ENCODE measurements at regions of chr7 and their contacts with region 1.

Region 1: DNA sequence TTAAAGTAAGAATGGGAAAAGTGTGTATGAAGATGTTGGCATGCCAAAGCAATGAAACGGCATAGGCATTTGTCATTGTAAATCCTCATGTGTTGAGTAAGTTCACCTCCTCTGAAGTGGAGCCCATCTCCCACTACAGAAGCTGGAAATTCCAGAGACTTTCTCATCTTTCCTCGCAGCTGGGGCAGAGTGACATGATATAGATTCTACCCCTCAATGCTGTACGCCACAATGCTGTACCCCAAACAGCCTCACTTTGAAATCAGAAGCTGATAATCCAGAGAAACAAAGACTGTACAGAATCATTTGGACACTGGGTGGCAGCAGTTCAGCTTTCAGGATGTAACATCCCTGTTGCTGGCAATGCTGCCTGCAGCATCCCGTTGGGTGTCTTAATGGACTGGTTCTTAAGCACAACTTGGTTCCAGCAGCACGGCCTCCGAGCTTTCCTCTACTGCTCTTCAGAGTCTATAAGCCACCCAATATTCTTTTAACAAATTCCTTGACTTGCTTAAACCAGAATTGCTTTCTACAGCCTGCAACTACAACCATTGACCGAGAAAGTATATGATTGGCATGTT is 18.8 kb downstream of the ZC3HAV1L start:
- DNase-seq: peak; percentile 52
- H3K4me3 Mint-ChIP-seq: no peak overlapping the region
- H3K27ac Mint-ChIP-seq: no peak overlapping the region
- H3K4me1 Mint-ChIP-seq: peaks cover 7% of the 10 kb centered on the region
- H3K27me3 Mint-ChIP-seq: peaks cover 11% of the 10 kb centered on the region

Region 2: GRCh38 chr7:139035586-139036353 is 18.7 kb after region 1 on chr7 and contains the start of gene ZC3HAV1L:
- intact Hi-C with region 1: loop called (anchors 1 kb)
- DNase-seq: peak; percentile 48
- H3K4me3 Mint-ChIP-seq: peak within 1 kb of the TSS; percentile 91
- H3K27ac Mint-ChIP-seq: peak within 1 kb of the TSS; percentile 85
- H3K4me1 Mint-ChIP-seq: peaks cover 38% of the 10 kb centered on the region
- H3K27me3 Mint-ChIP-seq: no peaks in the 10 kb centered on the region
- total RNA-seq, gene ZC3HAV1L: 29.6 and 31.5 TPM in 2 replicates

Region 3: GRCh38 chr7:139060695-139061237 is 43.7 kb after region 1 on chr7:
- intact Hi-C with region 1: loop called (anchors 2 kb)
- DNase-seq: no peak
- H3K4me3 Mint-ChIP-seq: no peak overlapping the region
- H3K27ac Mint-ChIP-seq: peak overlapping the region; percentile 74
- H3K4me1 Mint-ChIP-seq: peaks cover 65% of the 10 kb centered on the region
- H3K27me3 Mint-ChIP-seq: no peaks in the 10 kb centered on the region

Measured in activated T-helper 1 cell treated with anti-CD3 and anti-CD28 coated beads, Interleukin-12 subunit alpha, Interleukin-12 subunit beta, Interleukin-2, Interleukin-4 antibody, amounts not matched to agents 30 ng/mL and 10 ng/mL and 1 ng/mL, durations not matched to agents 14 hours and 24 hours and 36 hours (primary cell).